K562 (cell line): ENCODE measurements at regions of chr15 and their contacts with region 1.

Region 1: GRCh38 chr15:76846782-76847181 is 58.4 kb downstream of the SCAPER start:
- DNase-seq: no peak
- ATAC-seq: no peak
- H3K4me3 ChIP-seq: no peak overlapping the region
- H3K27ac ChIP-seq: no peak overlapping the region
- H3K4me1 ChIP-seq: no peaks in the 10 kb centered on the region
- H3K27me3 ChIP-seq: no peaks in the 10 kb centered on the region
- CTCF ChIP-seq: no peak
- EP300 ChIP-seq: no peak
- POLR2A ChIP-seq: no peak
- RAD21 ChIP-seq: no peak

Region 2: DNA sequence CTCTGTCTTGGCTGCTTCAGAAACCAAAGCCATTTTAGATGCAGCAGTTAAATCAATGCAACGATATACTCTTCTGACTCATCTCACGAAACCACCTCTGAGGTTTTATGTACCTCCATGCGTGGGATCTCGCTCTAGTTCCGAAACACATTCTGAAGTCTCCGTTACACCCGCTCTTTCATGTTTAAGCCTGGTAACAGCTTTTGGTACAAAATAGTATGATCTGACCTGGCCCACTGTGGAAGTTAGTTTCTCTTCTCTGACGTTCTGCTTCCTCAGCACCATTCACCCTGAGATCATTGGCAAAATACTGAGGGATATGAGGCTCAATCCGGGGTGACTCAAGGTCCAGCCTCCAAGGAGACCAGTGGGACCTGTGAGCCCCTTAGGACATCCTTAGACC is 665.1 kb before region 1 on chr15:
- CTCF ChIA-PET with region 1: no interaction called
- POLR2A ChIA-PET with region 1: no interaction called
- in situ Hi-C with region 1: loop called (anchors 5 kb)
- intact Hi-C with region 1: no loop called
- DNase-seq: no peak
- ATAC-seq: no peak
- H3K4me3 ChIP-seq: no peak overlapping the region
- H3K27ac ChIP-seq: no peak overlapping the region
- H3K4me1 ChIP-seq: peaks cover 0 to 3% of the 10 kb centered on the region in 2 experiments; a peak in 1 of 5 replicates
- H3K27me3 ChIP-seq: peaks cover 51 to 64% of the 10 kb centered on the region in 2 experiments
- CTCF ChIP-seq: no peak
- EP300 ChIP-seq: no peak
- POLR2A ChIP-seq: no peak
- RAD21 ChIP-seq: no peak

Region 3: GRCh38 chr15:76696871-76697270 is 149.9 kb before region 1 on chr15:
- CTCF ChIA-PET with region 1: no interaction called
- POLR2A ChIA-PET with region 1: no interaction called
- in situ Hi-C with region 1: no loop called
- intact Hi-C with region 1: no loop called
- DNase-seq: no peak
- ATAC-seq: no peak
- H3K4me3 ChIP-seq: no peak overlapping the region
- H3K27ac ChIP-seq: no peak overlapping the region
- H3K4me1 ChIP-seq: no peaks in the 10 kb centered on the region
- H3K27me3 ChIP-seq: no peaks in the 10 kb centered on the region
- CTCF ChIP-seq: no peak
- EP300 ChIP-seq: no peak
- POLR2A ChIP-seq: no peak
- RAD21 ChIP-seq: no peak